ENCODE measurements at regions of chr1 and their contacts with region 1.

Region 1: GRCh38 chr1:226121587-226122400 is 59.3 kb downstream of the H3-3A start:
- DNase-seq: peak; percentile 84
- H3K4me3 Mint-ChIP-seq: peak overlapping the region; percentile 73
- H3K27ac Mint-ChIP-seq: peak overlapping the region; percentile 90
- H3K4me1 Mint-ChIP-seq: peaks cover 54% of the 10 kb centered on the region
- H3K27me3 Mint-ChIP-seq: peaks cover 32% of the 10 kb centered on the region

Region 2: DNA sequence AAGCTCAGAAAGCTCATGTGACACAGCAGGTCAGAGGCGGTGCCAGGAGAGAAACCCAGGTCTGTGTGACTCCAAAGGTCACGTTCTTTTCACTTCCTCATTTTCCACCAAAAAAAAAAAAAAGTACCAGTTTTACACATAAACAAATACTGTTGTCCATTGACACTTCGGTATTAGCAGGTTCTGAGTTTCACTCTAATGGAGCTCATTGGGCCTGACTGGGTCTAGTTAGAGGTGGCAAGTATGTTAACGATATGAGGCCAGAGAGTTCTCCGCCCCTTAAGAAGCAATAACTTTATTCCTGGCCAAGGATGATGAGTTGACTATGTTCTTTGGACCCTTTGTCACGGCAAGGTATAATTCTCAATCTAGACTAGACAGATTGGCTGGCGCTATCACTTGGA is 92.7 kb before region 1 on chr1:
- CTCF ChIA-PET with region 1: no interaction called
- DNase-seq: no peak
- H3K4me3 Mint-ChIP-seq: no peak overlapping the region
- H3K27ac Mint-ChIP-seq: no peak overlapping the region
- H3K4me1 Mint-ChIP-seq: peaks cover 5% of the 10 kb centered on the region
- H3K27me3 Mint-ChIP-seq: peaks cover 11% of the 10 kb centered on the region

Region 3: GRCh38 chr1:226062558-226063223 is 59.1 kb before region 1 on chr1 and contains the start of gene H3-3A:
- CTCF ChIA-PET with region 1: interaction called, 33 read pairs
- DNase-seq: peak; percentile 98
- H3K4me3 Mint-ChIP-seq: peak within 1 kb of the TSS; percentile 100
- H3K27ac Mint-ChIP-seq: peak within 1 kb of the TSS; percentile 100
- H3K4me1 Mint-ChIP-seq: peaks cover 41% of the 10 kb centered on the region
- H3K27me3 Mint-ChIP-seq: no peaks in the 10 kb centered on the region

Region 4: GRCh38 chr1:226149806-226150205 is 28.0 kb after region 1 on chr1:
- CTCF ChIA-PET with region 1: interaction called, 13 read pairs
- DNase-seq: no peak
- H3K4me3 Mint-ChIP-seq: no peak overlapping the region
- H3K27ac Mint-ChIP-seq: no peak overlapping the region
- H3K4me1 Mint-ChIP-seq: peaks cover 5% of the 10 kb centered on the region
- H3K27me3 Mint-ChIP-seq: no peaks in the 10 kb centered on the region

Region 5: DNA sequence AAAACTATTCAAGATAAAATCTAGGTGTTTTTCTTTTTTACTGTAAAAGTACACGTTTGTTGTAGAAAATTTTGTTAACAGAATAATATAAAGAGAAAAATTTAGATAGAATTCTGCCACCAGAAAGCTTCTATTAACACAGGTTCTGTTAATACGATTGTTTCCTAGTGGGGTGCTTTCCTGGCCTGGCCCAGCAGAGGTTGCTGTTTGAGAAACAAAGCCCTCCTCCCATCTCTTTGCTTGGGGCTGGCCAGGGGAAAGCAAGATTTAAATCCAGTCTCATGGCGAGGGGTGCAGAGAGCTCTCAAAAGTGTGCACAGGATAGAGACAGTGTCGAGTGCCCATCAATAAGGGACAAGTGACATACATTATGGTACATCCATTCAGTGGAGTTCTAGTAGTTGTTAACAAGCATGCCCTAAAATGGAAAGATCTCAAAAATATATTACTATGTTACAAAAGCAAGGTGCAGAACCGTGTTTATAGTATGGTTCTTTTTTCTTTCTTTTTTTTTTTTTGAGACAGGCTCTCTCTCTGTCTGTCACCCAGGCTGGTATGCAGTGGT is 79.3 kb after region 1 on chr1:
- CTCF ChIA-PET with region 1: interaction called, 195 read pairs
- DNase-seq: peak; percentile 34
- H3K4me3 Mint-ChIP-seq: no peak overlapping the region
- H3K27ac Mint-ChIP-seq: no peak overlapping the region
- H3K4me1 Mint-ChIP-seq: peaks cover 2% of the 10 kb centered on the region
- H3K27me3 Mint-ChIP-seq: peaks cover 31% of the 10 kb centered on the region

Region 6: DNA sequence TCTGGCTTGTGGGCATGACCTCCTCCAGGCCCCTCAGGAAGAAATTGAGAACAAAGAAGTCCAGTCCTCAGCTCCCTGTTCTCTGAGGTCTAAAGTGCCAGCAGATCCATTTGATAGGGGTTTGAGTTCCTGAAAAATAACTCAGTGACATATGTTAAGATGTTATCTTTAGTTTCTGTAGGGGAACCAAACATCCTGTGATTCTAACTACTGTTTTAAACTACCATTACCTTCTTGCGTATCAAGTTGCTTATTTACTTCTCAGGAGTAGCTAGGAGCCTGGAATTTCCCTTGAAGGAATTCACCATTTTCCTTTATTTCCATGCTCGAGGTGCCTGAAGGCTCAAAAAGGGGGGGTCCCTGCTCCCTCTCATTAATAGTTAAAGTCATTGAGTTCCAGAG is 206.0 kb after region 1 on chr1:
- CTCF ChIA-PET with region 1: interaction called, 41 read pairs
- DNase-seq: no peak
- H3K4me3 Mint-ChIP-seq: no peak overlapping the region
- H3K27ac Mint-ChIP-seq: no peak overlapping the region
- H3K4me1 Mint-ChIP-seq: peaks cover 11% of the 10 kb centered on the region
- H3K27me3 Mint-ChIP-seq: peaks cover 14% of the 10 kb centered on the region